HEK293 (cell line): ENCODE measurements at regions of chr9 and their contacts with region 1.

Region 1: GRCh38 chr9:121213136-121213806 is 11.6 kb upstream of the RAB14 start:
- H3K4me3 ChIP-seq: no peak overlapping the region
- H3K27ac ChIP-seq: no peak overlapping the region
- H3K4me1 ChIP-seq: no peaks in the 10 kb centered on the region
- CTCF ChIP-seq: peak; percentile 44; the same call in 1 of the 2 replicates

Region 2: GRCh38 chr9:120755827-120756434 is 457.3 kb before region 1 on chr9:
- CTCF ChIA-PET with region 1: interaction called, 13 read pairs
- POLR2A ChIA-PET with region 1: no interaction called
- H3K4me3 ChIP-seq: no peak overlapping the region
- H3K27ac ChIP-seq: no peak overlapping the region
- H3K4me1 ChIP-seq: no peaks in the 10 kb centered on the region
- CTCF ChIP-seq: peak; percentile 68

Region 3: GRCh38 chr9:121023064-121023463 is 190.2 kb before region 1 on chr9:
- CTCF ChIA-PET with region 1: no interaction called
- POLR2A ChIA-PET with region 1: no interaction called
- H3K4me3 ChIP-seq: no peak overlapping the region
- H3K27ac ChIP-seq: no peak overlapping the region
- H3K4me1 ChIP-seq: no peaks in the 10 kb centered on the region
- CTCF ChIP-seq: no peak

Region 4: GRCh38 chr9:121192518-121192917 is 20.8 kb before region 1 on chr9:
- CTCF ChIA-PET with region 1: no interaction called
- POLR2A ChIA-PET with region 1: no interaction called
- H3K4me3 ChIP-seq: no peak overlapping the region
- H3K27ac ChIP-seq: no peak overlapping the region
- H3K4me1 ChIP-seq: peaks cover 5% of the 10 kb centered on the region; the same call in 1 of the 2 replicates
- CTCF ChIP-seq: no peak

Region 5: GRCh38 chr9:121233906-121234901 is 20.9 kb after region 1 on chr9:
- CTCF ChIA-PET with region 1: interaction called, 19 read pairs
- POLR2A ChIA-PET with region 1: no interaction called
- H3K4me3 ChIP-seq: no peak overlapping the region
- H3K27ac ChIP-seq: no peak overlapping the region
- H3K4me1 ChIP-seq: no peaks in the 10 kb centered on the region
- CTCF ChIP-seq: no peak

Region 6: DNA sequence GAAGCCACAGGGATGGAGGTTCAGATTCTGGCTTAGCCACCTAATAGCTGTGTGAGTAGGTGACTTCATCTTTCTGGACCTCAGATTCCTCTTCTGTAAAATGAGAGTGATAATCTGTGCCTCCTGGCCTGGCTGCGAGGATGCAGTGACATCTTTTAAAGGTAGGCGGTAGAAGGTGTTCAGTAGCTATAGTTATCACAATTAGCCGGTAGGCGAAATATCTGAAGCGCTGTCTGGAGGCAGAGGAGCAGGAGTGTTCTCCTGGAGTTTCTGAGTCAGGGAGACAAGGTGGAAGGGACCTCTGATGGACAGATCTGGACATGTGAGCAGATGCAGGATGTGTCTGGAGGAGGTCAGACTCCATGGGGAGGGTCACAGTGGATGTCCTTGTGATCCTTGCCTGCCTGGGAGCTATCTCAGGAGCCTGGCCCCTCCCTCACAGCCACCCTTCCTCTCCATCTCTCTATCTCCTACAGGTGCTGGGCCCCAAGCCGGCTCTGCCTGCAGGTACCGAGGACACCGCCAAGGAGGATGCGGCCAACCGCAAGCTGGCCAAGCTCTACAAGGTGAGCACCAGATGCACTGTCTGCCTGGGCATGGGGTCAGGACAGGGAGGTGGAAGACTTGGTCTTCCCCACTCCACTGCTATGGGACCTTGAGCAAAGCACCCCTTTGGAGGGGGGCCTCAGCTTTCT is 100.3 kb after region 1 on chr9:
- CTCF ChIA-PET with region 1: interaction called, 106 read pairs
- POLR2A ChIA-PET with region 1: no interaction called
- H3K4me3 ChIP-seq: no peak overlapping the region
- H3K27ac ChIP-seq: no peak overlapping the region
- H3K4me1 ChIP-seq: no peaks in the 10 kb centered on the region
- CTCF ChIP-seq: no peak

Region 7: DNA sequence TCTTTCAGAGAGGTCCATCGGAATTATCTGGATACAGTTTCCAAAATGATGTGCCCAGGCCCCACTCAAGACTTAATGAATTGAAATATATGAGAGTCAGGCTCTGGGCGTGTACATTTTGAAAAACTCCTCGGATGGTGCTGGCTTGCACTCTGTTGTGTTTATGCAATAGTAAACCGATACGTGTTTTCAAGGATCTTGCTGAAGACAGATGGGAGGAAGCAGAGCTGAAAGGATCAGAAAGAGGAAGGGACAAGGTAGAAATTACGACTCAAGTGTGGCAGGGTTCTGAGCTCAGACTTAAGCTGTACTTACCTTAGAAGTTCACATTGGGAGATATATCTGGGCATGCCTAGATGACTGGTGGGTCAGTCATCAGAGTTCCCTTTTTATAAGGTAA is 170.4 kb after region 1 on chr9:
- CTCF ChIA-PET with region 1: interaction called, 13 read pairs
- POLR2A ChIA-PET with region 1: no interaction called
- H3K4me3 ChIP-seq: no peak overlapping the region
- H3K27ac ChIP-seq: no peak overlapping the region
- H3K4me1 ChIP-seq: no peaks in the 10 kb centered on the region
- CTCF ChIP-seq: no peak